Breast epithelium (tissue), 4 donors: ENCODE measurements at regions of chr1 and their contacts with region 1.

Region 1: DNA sequence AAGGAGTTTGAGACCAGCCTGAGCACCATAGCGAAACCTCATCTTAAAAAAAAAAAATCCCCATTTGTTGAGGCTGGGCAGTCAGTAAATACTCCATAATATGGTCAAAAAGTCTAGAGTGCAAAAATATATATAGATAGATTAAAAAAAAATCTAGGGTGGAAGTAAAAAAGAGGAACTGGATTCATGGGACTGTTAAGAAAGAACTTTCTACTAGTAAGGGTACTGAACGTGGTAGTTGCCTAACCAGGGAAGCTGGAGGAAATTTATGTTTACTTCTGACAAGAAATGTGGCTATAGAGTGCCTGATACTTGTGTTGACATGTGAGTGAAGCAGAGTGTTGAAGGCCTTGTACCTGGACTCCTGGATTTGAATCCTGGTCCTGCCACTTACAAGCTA is 265.9 kb upstream of the FAM78B start:
- DNase-seq: no peak
- H3K4me3 ChIP-seq: no peak overlapping the region
- H3K27ac ChIP-seq: no peak overlapping the region
- H3K4me1 ChIP-seq: no peaks in the 10 kb centered on the region
- H3K27me3 ChIP-seq: no peaks in the 10 kb centered on the region
- CTCF ChIP-seq: no peak
- POLR2A ChIP-seq: no peak

Region 2: DNA sequence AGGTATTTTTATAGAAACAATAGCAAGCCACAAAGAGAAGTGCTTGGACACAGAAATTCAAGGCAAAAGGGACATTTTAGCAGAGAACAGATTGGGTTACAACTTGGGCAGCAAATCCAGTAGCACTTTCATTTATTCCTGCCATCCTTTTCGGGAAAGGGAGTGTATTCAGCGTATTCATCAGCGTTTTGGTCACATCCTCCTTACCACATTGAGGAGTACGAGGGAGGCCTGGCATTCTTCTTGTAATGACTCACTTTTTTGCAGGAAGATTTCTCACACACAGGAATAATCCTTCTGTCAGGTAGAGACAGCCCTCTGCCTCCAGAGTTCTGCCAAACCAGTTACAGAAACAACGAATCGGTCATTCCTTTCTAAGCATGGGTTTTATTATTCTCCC is 247.8 kb before region 1 on chr1:
- intact Hi-C with region 1: loop called (anchors 5 kb)
- DNase-seq: no peak
- H3K4me3 ChIP-seq: no peak overlapping the region
- H3K27ac ChIP-seq: no peak overlapping the region
- H3K4me1 ChIP-seq: no peaks in the 10 kb centered on the region
- H3K27me3 ChIP-seq: no peaks in the 10 kb centered on the region
- CTCF ChIP-seq: no peak
- POLR2A ChIP-seq: no peak

Region 3: DNA sequence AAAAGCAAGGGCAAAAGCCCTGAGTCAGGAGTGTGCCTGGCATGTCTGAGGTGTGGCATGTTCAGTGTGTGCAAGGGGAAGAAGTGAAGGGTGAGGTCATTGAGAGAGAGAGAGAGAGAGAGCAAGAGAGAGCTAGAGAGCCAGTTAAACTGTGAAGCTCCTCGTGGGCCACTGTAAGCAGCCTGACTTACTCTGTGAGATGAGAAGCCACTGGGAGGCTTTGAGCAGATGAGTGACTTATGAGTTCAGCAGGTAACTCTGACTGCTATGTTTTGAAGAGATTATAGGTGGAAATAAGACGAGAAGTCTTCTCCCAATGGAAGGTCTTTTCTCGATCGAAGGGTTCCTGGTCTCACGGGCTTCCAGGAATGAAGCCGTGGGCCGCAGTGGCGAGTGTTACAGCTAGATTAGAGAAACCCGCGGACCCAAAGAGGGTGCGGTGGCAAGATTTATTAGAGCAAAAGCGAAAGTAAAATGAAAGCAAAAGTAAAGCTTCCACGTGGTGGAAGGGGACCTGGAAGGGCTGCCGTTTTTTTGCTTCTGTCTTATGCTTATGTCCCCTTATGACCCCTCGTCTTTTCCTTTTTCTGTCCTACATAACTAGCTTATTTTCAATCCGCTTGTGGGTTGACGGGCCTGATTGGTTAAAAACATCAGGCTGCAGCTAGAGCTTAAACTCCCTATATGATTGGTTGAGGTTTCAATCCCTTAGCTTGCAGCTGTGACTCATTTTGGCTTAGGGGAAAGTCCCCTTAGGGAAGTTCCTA is 57.2 kb after region 1 on chr1:
- intact Hi-C with region 1: no loop called
- DNase-seq: no peak
- H3K4me3 ChIP-seq: peak overlapping the region; percentile 35 to 60 (median 50)
- H3K27ac ChIP-seq: peak overlapping the region in 1 of 2 donors; percentile 52
- H3K4me1 ChIP-seq: no peaks in the 10 kb centered on the region
- H3K27me3 ChIP-seq: no peaks in the 10 kb centered on the region
- CTCF ChIP-seq: no peak
- POLR2A ChIP-seq: no peak

Region 4: DNA sequence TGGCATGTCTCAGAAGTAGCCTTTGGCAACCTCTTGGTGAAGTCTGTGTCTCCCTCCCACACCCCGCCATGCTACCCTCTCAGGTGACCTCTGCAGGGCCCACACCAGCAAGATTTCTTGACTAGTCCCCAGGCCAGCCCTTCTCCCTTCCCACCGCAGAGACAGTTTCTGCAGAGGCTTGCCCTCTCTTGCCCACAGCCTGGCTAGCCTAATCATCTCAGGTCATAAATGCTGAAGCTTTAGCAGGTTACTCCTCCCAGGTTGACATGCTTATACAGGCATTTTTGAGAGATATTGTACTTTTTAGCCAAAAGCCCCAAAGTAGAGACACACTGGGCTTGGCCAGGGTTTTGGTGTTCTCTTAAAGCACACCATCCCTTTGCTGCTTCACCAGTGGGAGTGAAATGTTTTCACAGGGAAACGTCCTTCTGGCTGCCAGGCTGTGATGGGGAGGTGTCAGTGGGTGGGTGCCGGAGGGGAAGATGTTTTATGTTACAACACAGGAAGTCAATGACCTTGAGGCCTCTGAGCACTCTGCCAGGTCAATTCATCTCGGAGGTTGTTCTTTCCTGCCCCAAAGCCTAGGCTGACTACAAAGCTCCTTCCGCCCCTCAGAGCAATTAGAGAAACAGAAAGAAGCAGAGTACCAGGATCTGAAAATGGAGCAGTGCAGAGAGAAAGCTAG is 719.7 kb after region 1 on chr1:
- intact Hi-C with region 1: no loop called
- DNase-seq: no peak
- H3K4me3 ChIP-seq: no peak overlapping the region
- H3K27ac ChIP-seq: peak overlapping the region; percentile 36 to 48
- H3K4me1 ChIP-seq: no peaks in the 10 kb centered on the region
- H3K27me3 ChIP-seq: no peaks in the 10 kb centered on the region
- CTCF ChIP-seq: no peak
- POLR2A ChIP-seq: no peak